Activated CD8-positive, alpha-beta T cell treated with anti-CD3 and anti-CD28 coated beads for 36 hours (primary cell): ENCODE measurements at regions of chr19 and their contacts with region 1.

Region 1: GRCh38 chr19:48608798-48609263 is 2.3 kb downstream of the SPACA4 start:
- DNase-seq: peak; percentile 70
- ATAC-seq: peak; percentile 88
- H3K4me3 Mint-ChIP-seq: no peak overlapping the region
- H3K27ac Mint-ChIP-seq: no peak overlapping the region
- H3K4me1 Mint-ChIP-seq: no peaks in the 10 kb centered on the region
- H3K27me3 Mint-ChIP-seq: no peaks in the 10 kb centered on the region
- CTCF ChIP-seq: peak; percentile 48

Region 2: DNA sequence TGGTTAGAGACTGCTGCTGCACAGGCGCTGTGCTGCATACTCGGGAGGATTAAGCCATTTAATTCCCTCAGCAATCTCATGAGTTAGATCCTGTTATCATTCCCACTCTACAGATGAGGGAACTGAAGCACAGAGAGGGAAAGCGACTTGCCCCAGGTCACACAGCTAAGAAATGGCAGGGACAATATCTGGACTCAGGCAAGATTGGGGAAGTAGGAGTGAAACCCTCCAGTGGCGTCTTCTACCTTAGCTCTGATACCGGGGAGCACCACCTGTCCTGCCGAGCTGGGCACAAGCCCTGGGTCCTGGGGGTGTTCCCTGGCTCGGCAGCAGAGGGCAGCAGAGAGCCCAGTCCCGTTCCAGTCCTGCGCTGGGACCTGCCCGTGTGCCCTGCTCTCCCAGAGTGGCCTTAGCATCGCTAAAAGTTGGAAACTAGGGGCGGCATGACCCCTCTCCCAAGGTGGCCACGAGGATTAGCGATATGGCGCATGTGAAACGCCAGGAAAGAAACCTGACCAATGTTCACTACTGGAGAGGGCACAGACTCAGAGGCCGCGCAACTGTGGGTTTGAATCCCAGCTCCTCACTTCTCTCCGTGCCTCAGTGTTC is 119.1 kb before region 1 on chr19:
- CTCF ChIA-PET with region 1: interaction called, 28 read pairs
- POLR2A ChIA-PET with region 1: no interaction called
- intact Hi-C with region 1: no loop called
- DNase-seq: peak; percentile 86
- ATAC-seq: peak; percentile 37
- H3K4me3 Mint-ChIP-seq: no peak overlapping the region
- H3K27ac Mint-ChIP-seq: no peak overlapping the region
- H3K4me1 Mint-ChIP-seq: peaks cover 25% of the 10 kb centered on the region
- H3K27me3 Mint-ChIP-seq: peaks cover 17% of the 10 kb centered on the region
- CTCF ChIP-seq: peak; percentile 97

Region 3: DNA sequence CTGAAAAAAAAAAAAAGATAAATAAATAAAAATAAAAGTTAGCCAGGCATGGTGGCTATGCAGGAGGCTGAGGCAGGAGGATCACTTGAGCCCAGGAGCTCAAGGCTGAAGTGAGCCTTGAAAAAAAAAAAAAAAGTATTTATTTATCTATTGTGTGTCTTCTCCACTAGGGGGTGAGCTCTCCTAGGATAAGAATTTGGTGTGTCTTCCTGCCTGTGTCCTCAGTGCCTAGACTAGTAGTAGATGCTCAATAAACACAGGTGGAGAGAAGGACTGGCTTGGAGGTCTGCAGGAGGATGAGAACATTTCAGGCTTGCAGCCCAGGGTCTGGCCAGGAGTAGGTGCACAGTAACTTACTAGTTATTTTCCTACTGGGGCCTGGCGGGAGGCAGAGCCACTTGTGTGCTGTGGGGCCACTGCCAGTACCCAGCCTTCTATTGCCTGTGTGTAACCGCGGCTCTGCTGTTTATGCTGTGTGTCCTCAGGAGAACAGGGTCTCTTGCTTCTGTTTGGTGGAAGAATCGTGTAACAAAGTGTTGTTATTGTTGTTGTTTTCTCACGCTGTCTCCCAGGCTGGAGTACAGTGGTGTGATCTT is 102.6 kb before region 1 on chr19:
- CTCF ChIA-PET with region 1: interaction called, 21 read pairs
- POLR2A ChIA-PET with region 1: interaction called, 3 read pairs
- intact Hi-C with region 1: no loop called
- DNase-seq: peak; percentile 20
- ATAC-seq: no peak
- H3K4me3 Mint-ChIP-seq: no peak overlapping the region
- H3K27ac Mint-ChIP-seq: no peak overlapping the region
- H3K4me1 Mint-ChIP-seq: peaks cover 17% of the 10 kb centered on the region
- H3K27me3 Mint-ChIP-seq: no peaks in the 10 kb centered on the region
- CTCF ChIP-seq: peak; percentile 79

Region 4: GRCh38 chr19:48588670-48589399 is 20.0 kb before region 1 on chr19:
- CTCF ChIA-PET with region 1: interaction called, 15 read pairs
- POLR2A ChIA-PET with region 1: interaction called, 3 read pairs
- intact Hi-C with region 1: no loop called
- DNase-seq: peak; percentile 94
- ATAC-seq: peak; percentile 87
- H3K4me3 Mint-ChIP-seq: peak overlapping the region; percentile 38
- H3K27ac Mint-ChIP-seq: peak overlapping the region; percentile 36
- H3K4me1 Mint-ChIP-seq: peaks cover 15% of the 10 kb centered on the region
- H3K27me3 Mint-ChIP-seq: no peaks in the 10 kb centered on the region
- CTCF ChIP-seq: peak; percentile 88

Region 5: GRCh38 chr19:48596679-48597465 is 12.0 kb before region 1 on chr19:
- CTCF ChIA-PET with region 1: interaction called, 13 read pairs
- POLR2A ChIA-PET with region 1: interaction called, 3 read pairs
- intact Hi-C with region 1: no loop called
- DNase-seq: peak; percentile 70
- ATAC-seq: peak; percentile 79
- H3K4me3 Mint-ChIP-seq: peak overlapping the region; percentile 71
- H3K27ac Mint-ChIP-seq: peak overlapping the region; percentile 87
- H3K4me1 Mint-ChIP-seq: no peaks in the 10 kb centered on the region
- H3K27me3 Mint-ChIP-seq: no peaks in the 10 kb centered on the region
- CTCF ChIP-seq: no peak

Region 6: DNA sequence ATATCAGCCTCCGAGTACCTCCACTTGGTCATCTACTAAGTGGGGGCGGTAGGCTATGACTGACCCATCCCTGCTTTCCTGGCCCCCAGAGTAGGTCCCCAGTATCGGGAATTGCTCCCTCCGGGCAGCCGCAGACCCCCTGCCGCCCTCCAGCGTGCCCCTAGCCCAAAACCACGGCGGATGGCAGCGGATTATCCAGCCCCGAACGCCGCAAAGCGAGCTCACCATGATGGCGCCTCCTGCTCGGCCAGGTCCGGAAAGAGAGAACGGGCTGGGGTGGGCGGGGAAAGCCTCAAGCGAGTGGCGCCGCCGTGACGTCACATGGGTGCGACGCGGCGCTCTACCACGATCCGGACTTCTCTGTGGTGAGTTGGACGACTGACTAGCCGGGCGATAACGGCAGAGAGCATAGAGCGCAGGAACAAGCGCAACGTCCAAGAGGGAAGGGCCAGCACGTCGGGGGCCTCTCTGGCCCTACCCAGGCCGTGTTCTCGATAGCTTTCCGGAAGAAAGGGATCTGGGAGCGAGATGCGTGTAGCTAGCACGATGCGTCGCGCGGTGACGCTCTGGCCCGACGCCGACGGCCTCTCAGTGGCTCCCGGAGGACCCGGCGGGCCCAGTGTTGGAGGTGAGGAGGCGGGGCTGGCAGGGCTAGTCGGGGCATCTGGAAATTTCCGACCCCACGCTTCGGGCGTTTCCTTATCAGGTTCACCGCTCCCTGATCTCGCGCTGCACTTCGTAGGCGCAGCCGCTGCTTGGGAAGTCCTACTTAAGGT is 10.3 kb after region 1 on chr19 and contains the starts of genes RPL18 and SPHK2:
- CTCF ChIA-PET with region 1: interaction called, 14 read pairs
- POLR2A ChIA-PET with region 1: interaction called, 48 read pairs
- intact Hi-C with region 1: no loop called
- DNase-seq: peak; percentile 98
- ATAC-seq: peak; percentile 76
- H3K4me3 Mint-ChIP-seq: peak within 1 kb of the TSS; percentile 93
- H3K27ac Mint-ChIP-seq: peak within 1 kb of the TSS; percentile 100
- H3K4me1 Mint-ChIP-seq: peaks cover 38% of the 10 kb centered on the region
- H3K27me3 Mint-ChIP-seq: no peaks in the 10 kb centered on the region
- CTCF ChIP-seq: no peak
- total RNA-seq, gene RPL18: 2,304 to 2,324 TPM
- total RNA-seq, gene SPHK2: 22.3 to 22.9 TPM

Region 7: DNA sequence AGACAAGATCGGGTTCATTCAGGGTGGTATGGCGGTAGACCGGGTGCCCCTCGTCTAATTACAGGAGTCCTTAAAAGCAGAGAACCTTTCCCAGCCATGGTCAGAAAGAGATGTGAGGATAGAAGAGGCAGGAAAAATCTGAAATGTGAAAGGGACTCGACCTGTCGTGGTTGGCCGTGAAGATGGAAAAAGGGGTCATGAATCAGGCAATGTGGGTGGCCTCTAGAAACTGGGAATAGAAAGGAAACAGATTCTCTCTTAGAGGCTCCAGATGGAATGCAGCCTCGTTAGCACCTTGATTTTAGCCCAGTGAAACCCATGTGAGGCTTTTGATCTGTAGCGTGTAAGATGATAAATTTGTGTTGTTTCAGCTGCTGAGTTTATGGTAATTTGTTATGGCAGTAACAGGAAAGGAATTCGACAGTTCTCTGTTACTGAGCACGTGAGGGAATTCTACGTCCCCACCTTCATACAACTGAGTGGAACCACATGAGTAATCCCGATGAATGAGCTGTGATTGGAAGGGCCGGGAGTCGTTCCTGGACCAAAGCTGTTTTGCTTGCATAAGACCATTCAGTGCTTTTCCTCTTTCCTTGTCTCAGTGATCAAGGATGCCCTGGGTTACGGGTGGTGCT is 48.1 kb after region 1 on chr19:
- CTCF ChIA-PET with region 1: no interaction called
- POLR2A ChIA-PET with region 1: no interaction called
- intact Hi-C with region 1: no loop called
- DNase-seq: no peak
- ATAC-seq: no peak
- H3K4me3 Mint-ChIP-seq: no peak overlapping the region
- H3K27ac Mint-ChIP-seq: no peak overlapping the region
- H3K4me1 Mint-ChIP-seq: peaks cover 9% of the 10 kb centered on the region
- H3K27me3 Mint-ChIP-seq: no peaks in the 10 kb centered on the region
- CTCF ChIP-seq: no peak